ENCODE measurements at regions of chr18 and their contacts with region 1.

Region 1: DNA sequence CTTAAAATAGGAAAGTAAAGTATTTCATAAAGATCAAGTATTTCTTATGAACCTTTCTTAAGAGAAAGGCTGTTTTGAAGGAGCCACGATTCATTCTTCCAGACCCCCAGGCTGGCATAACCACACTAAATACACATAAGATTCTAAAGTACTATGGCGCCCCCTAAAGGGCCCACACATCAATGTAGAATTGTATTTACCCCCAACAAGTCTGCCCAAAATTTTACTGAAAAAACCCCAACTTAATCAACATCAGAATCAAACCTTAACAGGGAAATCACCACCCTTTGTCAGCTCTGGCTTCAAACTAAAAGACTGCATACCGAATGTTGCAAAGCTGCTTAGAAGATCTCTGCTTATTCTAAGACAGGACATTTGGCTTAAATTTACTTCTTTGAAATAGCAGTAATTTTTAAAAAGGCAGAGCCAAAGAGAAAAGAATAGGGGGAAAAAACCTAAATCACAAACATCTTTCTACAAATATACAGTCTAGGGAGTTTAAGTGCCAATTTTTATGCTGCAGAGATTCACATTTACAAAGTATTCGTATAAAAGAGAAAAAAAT is 20.4 kb upstream of the BCL2 start:
- DNase-seq: no peak
- H3K4me3 ChIP-seq: no peak overlapping the region
- CTCF ChIP-seq: peak; percentile 31

Region 2: GRCh38 chr18:63131106-63131958 is 208.7 kb before region 1 on chr18:
- CTCF ChIA-PET with region 1: interaction called, 14 read pairs
- POLR2A ChIA-PET with region 1: no interaction called
- DNase-seq: no peak
- H3K4me3 ChIP-seq: no peak overlapping the region
- CTCF ChIP-seq: peak; percentile 49

Region 3: GRCh38 chr18:63356272-63356896 is 16.4 kb after region 1 on chr18:
- CTCF ChIA-PET with region 1: interaction called, 30 read pairs
- POLR2A ChIA-PET with region 1: no interaction called
- DNase-seq: no peak
- H3K4me3 ChIP-seq: no peak overlapping the region
- CTCF ChIP-seq: no peak

Region 4: GRCh38 chr18:63366213-63367052 is 26.4 kb after region 1 on chr18:
- CTCF ChIA-PET with region 1: interaction called, 14 read pairs
- POLR2A ChIA-PET with region 1: interaction called, 4 read pairs
- DNase-seq: no peak
- H3K4me3 ChIP-seq: peak overlapping the region; percentile 81
- CTCF ChIP-seq: no peak